ENCODE measurements at regions of chr16 and their contacts with region 1.

Region 1: DNA sequence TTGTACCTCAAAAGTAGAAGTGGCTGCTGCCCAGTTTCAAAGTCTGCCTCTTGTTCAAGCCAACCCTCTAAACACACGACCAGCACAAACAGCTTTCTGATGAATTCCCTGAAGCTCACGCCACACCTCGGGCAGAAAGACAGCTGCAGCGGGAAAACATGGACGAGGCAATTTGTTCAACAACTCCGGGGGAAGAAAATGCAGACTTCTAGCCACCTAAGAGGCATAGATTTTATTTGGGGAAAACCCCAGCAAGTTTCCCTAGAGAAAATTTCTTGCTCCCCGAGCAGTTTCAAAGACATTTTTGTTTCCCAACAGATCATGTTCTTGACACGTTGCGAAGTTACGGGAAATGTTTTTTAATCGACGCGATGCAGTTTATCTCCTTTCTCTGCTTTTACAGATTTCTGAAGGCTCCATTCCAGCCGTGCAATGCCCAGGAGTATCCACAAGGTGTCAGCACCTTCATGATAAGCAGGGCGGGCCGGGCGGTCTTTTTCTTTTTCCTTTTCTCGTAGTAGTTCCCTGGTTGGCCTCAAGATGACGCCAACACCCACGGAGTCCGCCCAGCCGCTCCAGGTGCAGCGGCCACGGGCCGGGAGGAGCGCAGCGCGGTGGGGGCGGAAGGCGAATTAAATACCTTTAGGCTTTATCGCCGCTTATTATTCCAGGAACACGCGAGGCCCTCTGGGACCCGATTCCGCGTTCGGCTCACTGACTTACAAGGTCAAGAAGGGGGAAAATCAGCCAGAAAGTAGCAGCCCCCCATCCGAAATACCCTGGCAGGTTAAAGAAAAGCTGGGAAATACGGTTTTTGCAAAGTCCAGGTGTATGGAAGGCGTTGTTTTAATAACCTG is 2.9 kb upstream of the FOXC2 start:
- DNase-seq: peak in 1 of 2 experiments; percentile 95
- H3K4me3 ChIP-seq: peak overlapping the region in 3 of 4 experiments; percentile 34 to 53 (median 43); a peak in 6 of 8 replicates
- H3K27ac ChIP-seq: no peak overlapping the region
- H3K4me1 ChIP-seq: peaks cover 3 to 16% (median 8%) of the 10 kb centered on the region in 4 experiments
- H3K27me3 ChIP-seq: peaks cover 39 to 56% (median 49%) of the 10 kb centered on the region in 4 experiments; a peak in 6 of 7 replicates
- CTCF ChIP-seq: peak; percentile 82 to 99 (median 97)
- EP300 ChIP-seq: no peak
- POLR2A ChIP-seq: no peak
- RAD21 ChIP-seq: peak; percentile 100

Region 2: DNA sequence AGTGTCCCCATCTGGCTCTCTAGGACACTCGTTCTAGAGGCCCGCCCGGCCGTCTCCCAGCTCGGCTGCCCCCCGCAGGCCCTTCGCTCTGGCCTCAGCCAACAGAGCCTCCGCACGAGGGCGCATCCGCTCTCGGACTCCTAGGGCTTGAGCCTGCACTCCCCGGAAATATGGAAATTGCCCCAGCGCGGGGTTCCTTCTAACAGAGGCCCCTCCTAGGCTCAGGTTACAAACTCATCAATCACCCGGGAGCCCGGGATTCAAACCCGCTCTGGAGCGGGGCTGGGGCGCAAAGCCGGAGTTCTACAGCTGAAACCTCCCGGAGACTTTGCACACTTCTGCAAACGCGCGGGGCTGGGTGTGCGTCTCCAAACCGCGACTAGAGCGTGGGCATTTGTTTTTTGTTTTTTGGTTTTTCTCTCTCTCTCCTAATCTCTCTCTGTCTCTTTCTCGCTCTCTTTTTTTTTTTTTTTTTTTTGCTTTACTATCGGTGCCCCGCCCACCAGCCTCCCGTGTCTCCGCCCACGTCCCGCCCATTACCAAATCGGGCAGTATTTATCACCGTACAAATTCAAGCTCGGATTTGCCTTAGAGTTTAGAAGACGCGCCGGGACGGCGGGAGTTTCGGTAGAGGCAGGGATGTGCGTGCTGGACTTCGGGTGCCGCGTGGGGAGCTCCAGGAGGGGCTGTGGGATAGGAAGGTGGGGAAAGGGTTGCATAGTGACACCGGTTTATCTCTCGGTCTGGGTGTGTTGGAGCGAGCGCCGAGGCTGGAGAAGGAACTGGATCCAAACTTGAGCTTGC is 12.2 kb after region 1 on chr16:
- CTCF ChIA-PET with region 1: interaction called, 18 read pairs
- POLR2A ChIA-PET with region 1: no interaction called
- DNase-seq: peak in 1 of 2 experiments; percentile 89
- H3K4me3 ChIP-seq: peak overlapping the region; percentile 41 to 66 (median 43)
- H3K27ac ChIP-seq: no peak overlapping the region
- H3K4me1 ChIP-seq: peaks cover 8 to 59% (median 34%) of the 10 kb centered on the region in 4 experiments
- H3K27me3 ChIP-seq: peaks cover 91 to 100% (median 97%) of the 10 kb centered on the region in 4 experiments
- CTCF ChIP-seq: peak; percentile 59 to 68 (median 66)
- EP300 ChIP-seq: no peak
- POLR2A ChIP-seq: no peak
- RAD21 ChIP-seq: peak; percentile 53 to 71

Region 3: DNA sequence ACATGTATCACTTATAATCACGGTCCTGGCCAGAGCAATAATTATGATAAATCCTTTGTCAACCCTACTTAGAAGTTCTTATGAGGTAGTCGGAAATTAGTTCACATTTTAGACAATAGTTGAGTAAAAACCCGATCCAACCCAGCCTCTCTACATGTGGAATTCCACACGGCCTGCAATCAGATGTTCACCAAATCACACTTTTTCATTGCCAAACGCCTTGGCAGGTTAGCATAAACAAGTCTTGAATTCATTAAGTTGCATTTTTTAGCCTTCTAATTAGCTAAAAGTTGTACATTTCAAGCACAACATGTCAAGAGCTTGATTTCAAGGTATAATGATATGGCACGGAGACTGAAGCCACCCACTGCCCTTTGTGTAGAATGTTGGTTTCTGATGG is 80.0 kb after region 1 on chr16:
- CTCF ChIA-PET with region 1: no interaction called
- POLR2A ChIA-PET with region 1: no interaction called
- DNase-seq: no peak
- H3K4me3 ChIP-seq: no peak overlapping the region
- H3K27ac ChIP-seq: no peak overlapping the region
- H3K4me1 ChIP-seq: no peaks in the 10 kb centered on the region
- H3K27me3 ChIP-seq: no peaks in the 10 kb centered on the region; a peak in 1 of 7 replicates
- CTCF ChIP-seq: no peak
- EP300 ChIP-seq: no peak
- POLR2A ChIP-seq: no peak
- RAD21 ChIP-seq: no peak

Region 4: GRCh38 chr16:86680162-86680561 is 116.4 kb after region 1 on chr16:
- CTCF ChIA-PET with region 1: no interaction called
- POLR2A ChIA-PET with region 1: no interaction called
- DNase-seq: no peak
- H3K4me3 ChIP-seq: no peak overlapping the region
- H3K27ac ChIP-seq: no peak overlapping the region
- H3K4me1 ChIP-seq: no peaks in the 10 kb centered on the region; a peak in 1 of 7 replicates
- H3K27me3 ChIP-seq: no peaks in the 10 kb centered on the region
- CTCF ChIP-seq: no peak
- EP300 ChIP-seq: no peak
- POLR2A ChIP-seq: no peak
- RAD21 ChIP-seq: no peak

Region 5: GRCh38 chr16:86834451-86835035 is 270.8 kb after region 1 on chr16:
- CTCF ChIA-PET with region 1: interaction called, 19 read pairs
- POLR2A ChIA-PET with region 1: no interaction called
- DNase-seq: peak; percentile 34 to 67
- H3K4me3 ChIP-seq: no peak overlapping the region
- H3K27ac ChIP-seq: no peak overlapping the region
- H3K4me1 ChIP-seq: no peaks in the 10 kb centered on the region; a peak in 1 of 7 replicates
- H3K27me3 ChIP-seq: no peaks in the 10 kb centered on the region
- CTCF ChIP-seq: peak; percentile 42 to 55 (median 48)
- EP300 ChIP-seq: no peak
- POLR2A ChIP-seq: no peak
- RAD21 ChIP-seq: peak; percentile 50 to 53

Measured in H1 (cell line).